ENCODE measurements at regions of chr3 and their contacts with region 1.

Region 1: DNA sequence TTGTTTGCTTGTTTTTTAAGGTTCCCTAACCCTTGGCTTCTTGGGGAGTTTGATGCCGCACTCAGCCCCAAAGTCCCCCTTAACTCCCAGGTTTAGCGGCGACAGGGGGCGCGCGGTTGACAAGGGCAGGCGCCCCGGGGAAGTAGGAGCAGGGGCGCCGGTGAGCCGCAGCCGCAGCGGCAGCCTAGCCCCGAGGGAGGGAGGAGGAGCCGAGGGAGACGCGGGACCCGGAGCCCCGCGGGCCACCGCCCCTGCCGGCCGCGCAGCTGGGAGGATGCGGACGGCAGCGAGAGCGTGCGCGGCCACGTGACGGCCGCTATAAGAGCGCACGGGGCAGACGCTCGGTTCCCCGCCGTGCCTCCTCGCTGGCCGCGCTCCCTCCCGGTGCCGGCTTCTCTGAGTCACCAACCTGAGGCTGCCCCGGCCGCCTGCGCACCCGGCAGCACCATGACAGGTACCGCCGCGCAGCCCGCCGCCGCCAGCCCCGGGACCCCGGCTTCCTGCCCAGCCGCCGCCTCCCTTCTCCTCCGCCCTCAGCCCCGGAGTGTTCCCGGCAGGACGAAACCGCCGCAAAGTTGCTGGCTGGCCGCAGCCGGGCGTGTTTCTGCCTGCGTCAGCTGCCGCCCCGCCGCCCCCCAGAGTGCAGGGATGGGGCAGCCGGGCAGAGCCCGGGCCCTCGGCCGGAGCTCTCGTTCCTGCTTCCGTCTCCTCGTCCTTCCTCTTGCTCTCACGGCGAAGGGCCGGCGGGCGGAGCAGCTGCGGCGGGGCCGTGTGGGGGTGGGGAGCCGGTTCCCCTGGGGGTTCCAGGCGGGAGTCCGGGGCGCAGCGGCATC is at the start of gene GYG1:
- DNase-seq: peak; percentile 76
- H3K4me3 Mint-ChIP-seq: peak within 1 kb of the TSS; percentile 88
- H3K27ac Mint-ChIP-seq: peak within 1 kb of the TSS; percentile 84
- H3K4me1 Mint-ChIP-seq: peaks cover 39% of the 10 kb centered on the region
- H3K27me3 Mint-ChIP-seq: peaks cover 2% of the 10 kb centered on the region
- total RNA-seq, gene GYG1: 33.6 and 34.1 TPM in 2 replicates

Region 2: DNA sequence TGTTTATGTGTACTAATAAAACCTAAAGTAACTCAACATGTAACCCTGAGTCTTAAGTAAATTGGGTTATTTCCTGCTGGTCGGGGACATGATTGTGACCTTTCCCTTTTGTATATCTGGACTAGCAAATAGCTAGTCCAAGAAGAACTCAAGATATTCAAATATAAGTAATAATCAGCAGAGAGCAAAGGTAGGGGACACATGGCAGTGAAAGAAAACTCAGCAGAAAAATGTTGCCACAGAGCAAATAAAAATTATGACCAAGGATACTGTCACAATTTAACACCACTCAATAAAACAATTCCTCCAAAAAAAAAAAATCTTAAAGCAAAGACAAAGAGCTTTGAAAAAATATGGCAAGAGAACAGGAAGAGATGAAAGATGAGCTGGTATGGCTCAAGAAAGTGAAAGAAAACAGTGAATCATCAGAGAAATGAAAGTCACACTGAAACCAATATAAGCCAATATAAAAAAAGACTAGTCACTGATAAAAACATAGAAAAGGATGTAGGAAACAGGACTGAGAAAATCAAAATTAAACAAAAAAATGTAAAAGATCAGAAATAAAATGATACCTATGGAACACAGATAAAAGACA is 51.5 kb after region 1 on chr3:
- intact Hi-C with region 1: loop called (anchors 1 kb)
- DNase-seq: no peak
- H3K4me3 Mint-ChIP-seq: peak overlapping the region; percentile 1
- H3K27ac Mint-ChIP-seq: peak overlapping the region; percentile 7
- H3K4me1 Mint-ChIP-seq: peaks cover 28% of the 10 kb centered on the region
- H3K27me3 Mint-ChIP-seq: no peaks in the 10 kb centered on the region

Region 3: DNA sequence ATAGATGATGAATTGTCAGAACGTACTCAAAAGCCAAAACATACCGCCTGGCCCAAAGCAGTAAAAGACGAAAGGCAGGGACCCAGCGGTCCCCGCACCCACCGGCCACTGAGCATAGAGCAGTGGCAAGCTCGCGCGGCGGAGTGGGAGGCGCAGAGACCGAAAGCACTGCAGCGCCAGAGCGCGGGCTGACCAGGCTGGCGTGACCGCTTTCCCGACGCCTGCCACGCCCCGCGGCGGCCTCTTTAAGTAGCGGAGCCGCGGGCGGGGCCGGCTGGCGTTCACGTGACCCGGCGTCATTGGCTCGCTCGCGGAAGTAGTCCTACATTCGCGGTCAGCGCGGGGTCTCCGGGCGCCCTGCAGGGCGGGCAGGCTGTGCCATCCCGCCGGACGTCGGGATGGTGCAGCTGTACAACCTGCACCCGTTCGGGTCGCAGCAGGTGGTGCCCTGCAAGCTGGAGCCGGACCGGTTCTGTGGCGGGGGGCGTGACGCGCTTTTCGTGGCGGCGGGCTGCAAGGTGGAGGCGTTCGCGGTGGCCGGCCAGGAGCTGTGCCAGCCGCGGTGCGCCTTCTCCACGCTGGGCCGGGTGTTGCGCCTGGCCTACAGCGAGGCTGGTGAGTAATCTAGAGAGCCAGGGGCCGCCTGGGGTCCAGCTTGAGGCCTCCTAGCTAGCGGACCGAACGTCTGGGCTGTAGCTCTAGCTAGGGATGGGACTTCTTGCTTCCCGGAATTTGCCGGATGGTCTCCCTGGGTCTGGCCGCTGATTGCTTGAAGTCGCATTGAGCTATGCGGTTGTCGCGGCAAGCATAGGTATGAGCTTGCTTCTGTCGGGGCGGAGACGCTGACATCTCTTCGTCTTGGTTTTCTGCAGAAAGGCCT is 138.2 kb after region 1 on chr3 and contains the start of gene HPS3:
- intact Hi-C with region 1: loop called (anchors 1 kb)
- DNase-seq: peak; percentile 84
- H3K4me3 Mint-ChIP-seq: peak within 1 kb of the TSS; percentile 92
- H3K27ac Mint-ChIP-seq: peak within 1 kb of the TSS; percentile 88
- H3K4me1 Mint-ChIP-seq: peaks cover 39% of the 10 kb centered on the region
- H3K27me3 Mint-ChIP-seq: peaks cover 33% of the 10 kb centered on the region
- total RNA-seq, gene HPS3: 15.8 and 17.3 TPM in 2 replicates

Region 4: DNA sequence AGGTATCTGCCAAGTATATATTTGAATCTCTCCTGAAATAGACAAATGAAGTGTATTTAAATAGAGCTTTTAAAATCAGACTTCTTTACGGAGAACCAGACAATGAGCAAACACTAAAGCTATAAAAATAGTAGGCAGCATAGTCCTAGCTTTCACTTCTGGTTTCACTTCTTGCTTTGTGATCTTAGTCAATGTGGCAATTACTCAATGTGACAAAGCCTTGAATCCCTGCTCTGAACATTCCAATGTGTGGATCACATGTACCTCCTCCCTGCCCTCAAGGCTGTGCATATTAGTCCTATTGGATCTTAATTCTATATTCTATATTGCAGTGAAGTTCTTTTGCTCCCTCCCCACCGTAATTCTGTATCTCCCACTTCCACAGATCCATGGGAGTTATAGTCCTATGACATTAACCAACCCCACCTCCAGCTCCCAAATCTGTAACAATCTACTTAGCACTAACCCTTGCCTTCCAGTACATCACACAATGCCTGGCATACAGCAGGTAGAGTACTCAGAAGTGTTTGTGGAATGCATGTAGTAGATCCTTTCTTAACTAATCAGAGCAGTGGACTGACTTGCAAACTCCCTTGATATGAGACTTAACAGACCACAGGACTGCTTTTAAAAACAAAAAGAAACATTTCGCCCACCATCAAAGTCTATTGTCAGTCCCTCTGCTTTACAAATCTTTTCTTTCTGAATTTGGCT is 254.5 kb after region 1 on chr3:
- intact Hi-C with region 1: loop called (anchors 5 kb)
- DNase-seq: no peak
- H3K4me3 Mint-ChIP-seq: peak overlapping the region; percentile 16
- H3K27ac Mint-ChIP-seq: peak overlapping the region; percentile 51
- H3K4me1 Mint-ChIP-seq: peaks cover 37% of the 10 kb centered on the region
- H3K27me3 Mint-ChIP-seq: peaks cover 4% of the 10 kb centered on the region

Measured in activated T-helper 1 cell treated with anti-CD3 and anti-CD28 coated beads, Interleukin-12 subunit alpha, Interleukin-12 subunit beta, Interleukin-2, Interleukin-4 antibody, amounts not matched to agents 30 ng/mL and 10 ng/mL and 1 ng/mL, durations not matched to agents 14 hours and 24 hours and 36 hours (primary cell).